ENCODE measurements at regions of chr1 and their contacts with region 1.

Region 1: GRCh38 chr1:202018468-202019255 is 8.3 kb downstream of the ELF3 start:
- DNase-seq: peak; percentile 96 to 99
- H3K4me3 ChIP-seq: peak overlapping the region; percentile 86; the same call in 1 of the 2 replicates
- H3K27ac ChIP-seq: peak overlapping the region; percentile 97
- H3K4me1 ChIP-seq: peaks cover 98% of the 10 kb centered on the region
- H3K27me3 ChIP-seq: no peaks in the 10 kb centered on the region
- CTCF ChIP-seq: no peak

Region 2: GRCh38 chr1:201818971-201819750 is 199.5 kb before region 1 on chr1:
- CTCF ChIA-PET with region 1: no interaction called
- POLR2A ChIA-PET with region 1: no interaction called
- intact Hi-C with region 1: no loop called
- DNase-seq: no peak
- H3K4me3 ChIP-seq: no peak overlapping the region
- H3K27ac ChIP-seq: no peak overlapping the region
- H3K4me1 ChIP-seq: no peaks in the 10 kb centered on the region
- H3K27me3 ChIP-seq: no peaks in the 10 kb centered on the region
- CTCF ChIP-seq: no peak

Region 3: GRCh38 chr1:202046227-202046801 is 27.7 kb after region 1 on chr1:
- CTCF ChIA-PET with region 1: interaction called, 4 read pairs
- POLR2A ChIA-PET with region 1: interaction called, 66 read pairs
- intact Hi-C with region 1: loop called (anchors 1 kb)
- DNase-seq: peak; percentile 95 to 97
- H3K4me3 ChIP-seq: peak overlapping the region; percentile 24; the same call in 1 of the 2 replicates
- H3K27ac ChIP-seq: peak overlapping the region; percentile 98
- H3K4me1 ChIP-seq: peaks cover 77% of the 10 kb centered on the region
- H3K27me3 ChIP-seq: no peaks in the 10 kb centered on the region
- CTCF ChIP-seq: no peak

Region 4: GRCh38 chr1:202085682-202086404 is 67.2 kb after region 1 on chr1:
- CTCF ChIA-PET with region 1: no interaction called
- POLR2A ChIA-PET with region 1: interaction called, 7 read pairs
- intact Hi-C with region 1: loop called (anchors 2 kb)
- DNase-seq: peak; percentile 41 to 53
- H3K4me3 ChIP-seq: no peak overlapping the region
- H3K27ac ChIP-seq: peak overlapping the region; percentile 44
- H3K4me1 ChIP-seq: peaks cover 47% of the 10 kb centered on the region
- H3K27me3 ChIP-seq: no peaks in the 10 kb centered on the region
- CTCF ChIP-seq: no peak

Region 5: GRCh38 chr1:202112839-202113672 is 94.4 kb after region 1 on chr1:
- CTCF ChIA-PET with region 1: interaction called, 3 read pairs
- POLR2A ChIA-PET with region 1: interaction called, 17 read pairs
- intact Hi-C with region 1: loop called (anchors 1 kb)
- DNase-seq: peak; percentile 67 to 86
- H3K4me3 ChIP-seq: peak overlapping the region; percentile 23; the same call in 1 of the 2 replicates
- H3K27ac ChIP-seq: peak overlapping the region; percentile 97
- H3K4me1 ChIP-seq: peaks cover 92% of the 10 kb centered on the region
- H3K27me3 ChIP-seq: no peaks in the 10 kb centered on the region
- CTCF ChIP-seq: no peak

Measured in PC-9 (cell line).